ENCODE measurements at regions of chr17 and their contacts with region 1.

Region 1: DNA sequence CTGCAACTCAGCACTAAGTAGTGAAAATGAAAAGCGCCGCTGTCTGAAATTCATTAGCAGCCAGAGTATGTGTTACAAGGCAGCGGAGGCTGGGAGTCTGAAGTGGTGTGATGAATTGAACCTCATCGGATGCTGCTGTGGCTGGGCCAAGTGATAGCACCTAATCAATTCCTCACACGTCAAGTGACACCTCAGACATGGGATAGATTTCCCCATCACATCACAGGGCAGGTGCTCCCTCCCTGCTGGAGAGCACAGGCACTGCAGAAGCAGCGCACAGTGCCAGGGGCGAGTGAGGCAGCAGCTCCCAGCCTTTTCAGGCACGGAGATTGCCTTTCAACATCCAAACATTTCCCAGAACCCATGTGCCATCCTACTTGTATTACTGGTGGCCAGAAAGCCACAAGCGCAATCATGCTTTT is 32.2 kb downstream of the DRC3 start:
- DNase-seq: no peak
- ATAC-seq: peak; percentile 83
- H3K4me3 ChIP-seq: no peak overlapping the region
- H3K27ac ChIP-seq: no peak overlapping the region
- H3K4me1 ChIP-seq: peaks cover 7% of the 10 kb centered on the region
- H3K27me3 ChIP-seq: no peaks in the 10 kb centered on the region
- CTCF ChIP-seq: no peak
- EP300 ChIP-seq: no peak
- POLR2A ChIP-seq: no peak
- RAD21 ChIP-seq: no peak

Region 2: GRCh38 chr17:18102640-18103039 is 97.7 kb after region 1 on chr17:
- CTCF ChIA-PET with region 1: no interaction called
- POLR2A ChIA-PET with region 1: no interaction called
- in situ Hi-C with region 1: loop called (anchors 25 kb)
- intact Hi-C with region 1: no loop called
- DNase-seq: no peak
- ATAC-seq: no peak
- H3K4me3 ChIP-seq: no peak overlapping the region
- H3K27ac ChIP-seq: no peak overlapping the region
- H3K4me1 ChIP-seq: no peaks in the 10 kb centered on the region
- H3K27me3 ChIP-seq: no peaks in the 10 kb centered on the region
- CTCF ChIP-seq: no peak
- EP300 ChIP-seq: no peak
- POLR2A ChIP-seq: no peak
- RAD21 ChIP-seq: no peak